ENCODE measurements at regions of chr15 and their contacts with region 1.

Region 1: DNA sequence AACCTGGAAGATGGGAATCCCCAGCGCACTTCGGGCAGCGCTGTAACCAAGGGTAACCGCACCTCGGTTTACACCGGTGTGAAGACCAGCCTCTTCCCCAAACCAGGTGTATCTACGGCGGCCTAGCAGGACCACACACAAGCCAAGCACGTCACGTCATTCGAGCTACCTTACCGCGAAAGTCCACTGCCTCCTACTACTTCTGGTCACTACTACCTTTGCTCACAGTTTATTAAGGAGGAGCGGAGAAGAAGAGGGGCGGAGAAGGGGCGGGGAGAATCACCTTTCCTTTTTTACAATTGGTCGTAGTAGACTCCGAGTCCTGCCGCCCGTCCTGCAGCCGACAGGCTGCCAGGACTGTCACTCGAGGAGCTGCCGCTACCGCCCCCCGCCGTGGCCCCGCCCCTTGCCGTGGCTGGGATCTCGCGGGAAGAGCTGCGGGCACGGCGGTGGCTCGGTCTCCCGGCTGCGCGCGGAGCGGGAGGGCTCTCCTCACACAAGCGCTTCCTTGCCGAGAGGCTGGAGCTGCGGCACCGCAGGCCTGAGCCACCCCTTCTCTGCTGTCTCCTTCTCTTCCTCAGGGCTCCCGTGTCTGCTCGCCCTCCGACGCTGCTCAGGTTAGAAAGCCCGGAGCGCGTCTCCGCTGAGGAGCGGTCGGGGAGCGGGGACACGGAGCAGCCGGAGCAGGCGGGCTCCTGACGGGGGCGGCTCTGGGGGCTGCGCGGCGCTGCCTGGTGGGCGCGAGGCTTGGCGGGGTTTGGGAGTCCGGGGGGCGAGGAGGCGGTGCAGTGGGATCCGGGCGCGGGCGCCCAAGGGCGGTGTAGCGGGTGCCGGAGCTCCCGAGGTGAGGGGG is at the start of gene GLCE:
- DNase-seq: peak; percentile 92 to 100 (median 97)

Region 2: DNA sequence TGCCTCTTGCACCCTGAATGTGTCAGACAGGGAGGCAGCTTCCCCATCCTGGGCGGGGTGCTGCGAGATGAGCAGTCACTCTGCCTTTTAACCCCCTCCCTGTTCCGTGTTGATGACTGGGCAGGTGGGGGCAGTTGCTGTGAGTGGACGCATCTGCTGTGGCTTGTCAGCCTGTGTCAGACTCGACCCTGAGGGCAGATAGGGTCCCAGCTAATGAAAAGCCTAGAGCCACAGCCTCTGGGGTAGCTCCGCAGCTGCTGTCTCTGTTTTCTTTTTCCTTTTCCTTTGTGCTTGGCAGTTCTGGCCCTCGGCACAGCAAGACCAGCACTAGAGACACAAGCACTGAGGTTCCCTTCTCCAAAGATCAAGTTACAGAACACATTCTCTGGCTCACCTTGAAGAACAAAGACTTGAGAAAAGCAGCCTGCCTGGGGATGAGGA is 42.9 kb before region 1 on chr15:
- intact Hi-C with region 1: no loop called
- DNase-seq: no peak

Region 3: DNA sequence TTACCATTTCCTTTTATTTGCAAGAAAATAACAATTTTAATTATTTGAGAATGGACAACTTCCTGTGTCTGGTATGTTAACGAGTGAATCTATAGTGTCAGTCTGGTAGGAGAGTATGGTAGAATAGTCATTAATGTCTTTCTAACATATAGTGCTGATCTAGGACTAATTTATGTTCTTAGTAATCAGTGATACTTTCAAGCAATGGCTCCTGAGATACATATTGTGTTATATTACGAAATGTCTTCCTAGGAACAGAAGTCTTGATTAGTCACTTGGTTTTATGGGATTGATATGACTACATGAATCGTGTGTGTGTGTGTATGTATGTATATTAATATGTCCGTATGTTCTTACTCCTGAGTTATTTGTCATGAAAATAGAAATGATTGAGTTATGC is 71.8 kb after region 1 on chr15:
- intact Hi-C with region 1: no loop called
- DNase-seq: no peak

Region 4: DNA sequence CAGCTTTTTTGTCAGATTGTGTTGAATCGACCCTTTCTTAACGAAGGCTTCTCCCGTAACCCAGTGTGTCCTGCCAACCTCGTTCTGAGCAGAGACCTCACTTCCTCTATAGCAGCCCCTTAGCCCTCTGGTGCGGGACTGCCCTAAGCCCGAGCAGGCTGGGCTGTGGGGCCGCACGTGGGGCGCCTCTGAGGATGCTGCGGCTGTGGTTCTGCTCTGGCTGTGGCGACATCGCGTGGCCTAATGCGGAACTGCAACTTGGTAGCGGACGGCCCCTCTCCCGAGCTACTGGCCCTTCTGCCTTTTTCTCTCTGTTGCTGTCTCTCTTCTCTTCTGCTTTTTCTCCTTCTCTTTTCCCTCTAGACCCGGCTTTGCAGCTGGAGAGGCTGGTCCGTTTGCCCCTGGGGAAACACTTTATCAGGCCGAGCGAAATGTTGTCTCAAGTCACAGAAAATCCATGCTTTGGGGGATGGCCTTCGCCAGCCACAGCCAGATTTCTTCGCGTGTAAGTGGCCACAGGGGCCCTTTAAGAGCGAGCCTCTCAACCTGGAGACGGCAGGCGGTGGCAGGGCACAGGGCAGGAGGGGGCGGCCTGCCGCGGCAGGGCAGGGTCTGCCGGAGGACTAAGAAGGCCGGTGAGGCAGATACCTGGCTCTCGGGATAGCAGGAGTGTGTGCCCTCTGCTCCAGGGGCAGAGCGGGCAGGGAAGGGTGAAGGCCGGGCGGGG is 234.4 kb after region 1 on chr15:
- intact Hi-C with region 1: loop called (anchors 5 kb)
- DNase-seq: peak; percentile 74 to 98 (median 92)